Mammary epithelial cell (primary cell): ENCODE measurements at regions of chr14 and their contacts with region 1.

Region 1: GRCh38 chr14:78605897-78606500 is 435.8 kb downstream of the NRXN3 start:
- DNase-seq: peak; percentile 1
- H3K4me3 ChIP-seq: no peak overlapping the region
- H3K27ac ChIP-seq: no peak overlapping the region
- H3K4me1 ChIP-seq: no peaks in the 10 kb centered on the region
- H3K27me3 ChIP-seq: no peaks in the 10 kb centered on the region
- CTCF ChIP-seq: no peak

Region 2: GRCh38 chr14:78479127-78479780 is 126.7 kb before region 1 on chr14:
- CTCF ChIA-PET with region 1: no interaction called
- dilution Hi-C with region 1: no loop called
- in situ Hi-C with region 1: no loop called
- intact Hi-C with region 1: no loop called
- DNase-seq: no peak
- H3K4me3 ChIP-seq: no peak overlapping the region
- H3K27ac ChIP-seq: no peak overlapping the region
- H3K4me1 ChIP-seq: no peaks in the 10 kb centered on the region
- H3K27me3 ChIP-seq: no peaks in the 10 kb centered on the region
- CTCF ChIP-seq: no peak

Region 3: DNA sequence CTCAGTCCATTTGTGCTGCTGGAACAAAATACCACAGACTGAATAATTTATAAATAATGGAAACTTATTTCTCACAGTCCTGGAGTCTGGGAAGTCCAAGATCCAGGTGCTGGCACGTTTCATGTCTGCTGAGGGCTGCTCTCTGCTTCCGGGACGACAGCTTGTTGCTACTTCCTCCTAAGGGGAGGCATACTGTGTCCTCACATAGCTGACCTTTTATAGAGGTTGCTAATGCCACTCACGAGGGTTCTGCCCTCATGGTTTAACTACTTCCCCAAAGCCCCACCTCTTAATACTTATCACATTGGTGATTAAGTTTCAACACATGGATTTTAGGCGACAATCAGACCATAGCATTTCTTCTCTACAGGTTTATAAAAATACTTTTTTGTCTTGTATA is 24.8 kb before region 1 on chr14:
- CTCF ChIA-PET with region 1: no interaction called
- dilution Hi-C with region 1: no loop called
- in situ Hi-C with region 1: no loop called
- intact Hi-C with region 1: no loop called
- DNase-seq: no peak
- H3K4me3 ChIP-seq: no peak overlapping the region
- H3K27ac ChIP-seq: no peak overlapping the region
- H3K4me1 ChIP-seq: no peaks in the 10 kb centered on the region
- H3K27me3 ChIP-seq: no peaks in the 10 kb centered on the region
- CTCF ChIP-seq: no peak

Region 4: DNA sequence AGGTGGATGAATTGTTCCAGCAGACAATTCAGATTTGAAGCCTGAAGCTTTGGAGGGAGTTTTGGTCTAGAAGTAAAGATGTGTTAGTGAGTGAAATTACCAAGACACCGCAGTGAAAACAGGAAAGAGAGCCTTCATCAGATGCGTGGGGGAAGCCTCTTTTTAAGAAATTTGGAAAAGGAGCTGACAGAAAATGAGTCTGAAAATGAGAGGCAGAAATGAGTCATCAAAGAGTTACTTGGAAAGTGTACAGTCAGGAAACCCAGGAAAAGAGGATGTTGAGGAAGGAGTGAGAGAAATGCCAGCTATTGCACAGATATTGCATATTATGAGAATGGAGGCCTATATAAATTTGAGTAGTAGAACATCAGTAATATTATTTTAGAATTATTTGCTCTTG is 84.8 kb after region 1 on chr14:
- CTCF ChIA-PET with region 1: no interaction called
- dilution Hi-C with region 1: loop called (anchors 5 kb)
- in situ Hi-C with region 1: no loop called
- intact Hi-C with region 1: no loop called
- DNase-seq: no peak
- H3K4me3 ChIP-seq: no peak overlapping the region
- H3K27ac ChIP-seq: no peak overlapping the region
- H3K4me1 ChIP-seq: no peaks in the 10 kb centered on the region
- H3K27me3 ChIP-seq: no peaks in the 10 kb centered on the region
- CTCF ChIP-seq: no peak